ENCODE measurements at regions of chr11 and their contacts with region 1.

Region 1: DNA sequence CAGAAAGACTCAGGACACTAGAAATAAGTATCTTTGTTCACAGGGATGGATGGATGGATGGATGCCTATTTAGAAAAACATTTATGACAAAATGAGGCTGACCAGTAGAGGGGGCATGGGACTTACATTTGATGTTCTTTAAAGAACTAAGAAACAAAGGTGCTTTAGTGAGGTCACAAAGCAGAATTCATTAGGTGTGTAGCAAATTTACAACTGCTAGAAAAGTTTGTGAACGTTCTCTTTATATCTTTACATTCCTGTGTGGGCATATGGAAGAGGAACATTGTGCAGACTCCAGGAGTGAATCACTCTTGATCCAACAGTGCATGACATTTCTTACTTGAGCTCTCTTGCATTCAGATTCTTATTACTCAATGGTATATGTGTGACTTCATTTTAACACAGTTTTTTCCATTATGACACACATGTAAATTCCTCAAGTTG is 15.8 kb upstream of the SIK2 start:
- DNase-seq: peak in 3 of 5 donors; percentile 17 to 69 (median 66)
- H3K4me3 ChIP-seq: no peak overlapping the region
- H3K27ac ChIP-seq: no peak overlapping the region
- H3K4me1 ChIP-seq: no peaks in the 10 kb centered on the region
- H3K27me3 ChIP-seq: no peaks in the 10 kb centered on the region
- CTCF ChIP-seq: peak; percentile 62

Region 2: GRCh38 chr11:111162305-111162704 is 424.1 kb before region 1 on chr11:
- intact Hi-C with region 1: no loop called
- DNase-seq: no peak
- H3K4me3 ChIP-seq: no peak overlapping the region
- H3K27ac ChIP-seq: no peak overlapping the region
- H3K4me1 ChIP-seq: no peaks in the 10 kb centered on the region
- H3K27me3 ChIP-seq: no peaks in the 10 kb centered on the region
- CTCF ChIP-seq: no peak

Region 3: GRCh38 chr11:111694851-111695250 is 108.4 kb after region 1 on chr11:
- intact Hi-C with region 1: no loop called
- DNase-seq: peak in 3 of 5 donors; percentile 54 to 77 (median 72)
- H3K4me3 ChIP-seq: no peak overlapping the region
- H3K27ac ChIP-seq: no peak overlapping the region
- H3K4me1 ChIP-seq: peaks cover 0 to 10% (median 10%) of the 10 kb centered on the region in 3 donors
- H3K27me3 ChIP-seq: no peaks in the 10 kb centered on the region
- CTCF ChIP-seq: no peak

Region 4: DNA sequence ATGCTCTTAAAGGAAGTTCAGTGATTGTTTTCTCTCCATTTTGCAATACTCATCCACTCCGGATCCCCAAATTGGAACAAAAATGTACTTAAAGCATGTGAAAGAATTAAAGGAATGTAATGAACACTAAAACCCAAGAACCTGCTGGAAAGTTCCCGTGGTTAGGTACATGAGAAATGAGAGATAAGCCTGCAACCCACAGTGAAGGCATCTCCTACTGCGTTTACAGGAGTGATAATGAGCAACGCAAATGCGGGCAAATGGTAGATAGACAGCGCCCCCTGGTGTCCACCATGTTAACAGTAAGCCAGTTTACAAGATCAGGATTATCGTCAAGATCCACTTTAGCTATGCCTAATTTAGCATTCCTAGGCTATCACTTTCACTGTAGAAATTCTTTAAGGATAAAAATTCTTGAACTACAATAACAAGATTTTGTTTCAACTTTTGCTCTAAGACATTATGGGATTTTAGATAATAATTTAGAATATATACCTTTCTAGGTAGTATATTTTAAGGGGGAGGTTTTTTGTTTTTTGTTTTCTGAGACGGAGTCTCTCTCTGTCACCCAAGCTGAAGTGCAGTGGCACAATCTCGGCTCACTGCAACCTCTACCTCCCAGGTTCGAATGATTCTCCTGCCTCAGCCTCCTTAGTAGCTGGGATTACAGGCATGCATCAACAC is 255.1 kb after region 1 on chr11:
- intact Hi-C with region 1: loop called (anchors 10 kb)
- DNase-seq: peak; percentile 84 to 91 (median 86)
- H3K4me3 ChIP-seq: no peak overlapping the region
- H3K27ac ChIP-seq: no peak overlapping the region
- H3K4me1 ChIP-seq: peaks cover 0 to 8% (median 4%) of the 10 kb centered on the region in 3 donors
- H3K27me3 ChIP-seq: no peaks in the 10 kb centered on the region
- CTCF ChIP-seq: peak; percentile 98

Measured in kidney (tissue), 22 donors.